ENCODE measurements at regions of chr15 and their contacts with region 1.

Region 1: DNA sequence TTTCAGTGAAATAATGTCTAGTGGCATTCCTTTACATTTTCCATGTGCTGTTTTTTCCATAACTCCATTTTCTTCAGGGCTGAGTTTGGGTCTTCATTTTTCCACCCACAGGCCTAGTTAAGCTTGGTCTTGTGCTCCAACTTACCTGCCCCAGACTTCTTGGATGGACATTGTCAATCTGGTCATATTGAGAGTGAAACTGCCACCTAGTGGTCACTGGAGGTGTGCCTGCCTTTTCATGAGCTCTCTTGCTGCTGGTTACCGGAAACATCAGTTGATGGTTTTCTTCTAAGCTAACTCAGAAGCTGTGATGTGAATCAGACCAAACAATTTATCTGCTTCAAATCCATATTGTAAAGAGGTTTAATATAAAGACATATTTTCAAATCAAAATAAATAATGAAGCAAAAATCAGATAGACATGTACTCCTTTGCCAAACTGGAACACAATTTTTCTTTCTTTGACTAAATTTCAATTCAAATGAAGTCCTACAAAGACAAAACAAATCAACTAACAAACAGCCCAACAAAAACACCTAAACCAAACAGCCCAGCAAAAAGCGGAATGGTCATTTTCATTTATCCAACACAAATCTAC is 135.1 kb upstream of the RASGRP1 start:
- DNase-seq: peak; percentile 89
- ATAC-seq: peak; percentile 56
- H3K4me3 Mint-ChIP-seq: no peak overlapping the region
- H3K27ac Mint-ChIP-seq: peak overlapping the region; percentile 59
- H3K4me1 Mint-ChIP-seq: peaks cover 58% of the 10 kb centered on the region
- H3K27me3 Mint-ChIP-seq: no peaks in the 10 kb centered on the region
- CTCF ChIP-seq: peak; percentile 89

Region 2: GRCh38 chr15:38453971-38454695 is 245.6 kb before region 1 on chr15 and contains the start of gene FAM98B:
- CTCF ChIA-PET with region 1: interaction called, 63 read pairs
- POLR2A ChIA-PET with region 1: interaction called, 15 read pairs
- intact Hi-C with region 1: no loop called
- DNase-seq: peak; percentile 89
- ATAC-seq: peak; percentile 95
- H3K4me3 Mint-ChIP-seq: peak within 1 kb of the TSS; percentile 95
- H3K27ac Mint-ChIP-seq: peak within 1 kb of the TSS; percentile 93
- H3K4me1 Mint-ChIP-seq: peaks cover 30% of the 10 kb centered on the region
- H3K27me3 Mint-ChIP-seq: no peaks in the 10 kb centered on the region
- CTCF ChIP-seq: no peak
- total RNA-seq, gene FAM98B: 51.0 to 61.8 TPM

Region 3: GRCh38 chr15:38474155-38474757 is 225.5 kb before region 1 on chr15:
- CTCF ChIA-PET with region 1: interaction called, 108 read pairs
- POLR2A ChIA-PET with region 1: interaction called, 4 read pairs
- intact Hi-C with region 1: no loop called
- DNase-seq: peak; percentile 24
- ATAC-seq: peak; percentile 97
- H3K4me3 Mint-ChIP-seq: no peak overlapping the region
- H3K27ac Mint-ChIP-seq: no peak overlapping the region
- H3K4me1 Mint-ChIP-seq: peaks cover 2% of the 10 kb centered on the region
- H3K27me3 Mint-ChIP-seq: no peaks in the 10 kb centered on the region
- CTCF ChIP-seq: peak; percentile 79

Region 4: GRCh38 chr15:38508647-38509046 is 191.1 kb before region 1 on chr15:
- CTCF ChIA-PET with region 1: interaction called, 46 read pairs
- POLR2A ChIA-PET with region 1: interaction called, 3 read pairs
- intact Hi-C with region 1: no loop called
- DNase-seq: peak; percentile 33
- ATAC-seq: peak; percentile 78
- H3K4me3 Mint-ChIP-seq: no peak overlapping the region
- H3K27ac Mint-ChIP-seq: peak overlapping the region; percentile 93
- H3K4me1 Mint-ChIP-seq: peaks cover 38% of the 10 kb centered on the region
- H3K27me3 Mint-ChIP-seq: no peaks in the 10 kb centered on the region
- CTCF ChIP-seq: no peak

Region 5: GRCh38 chr15:38554354-38554753 is 145.4 kb before region 1 on chr15:
- CTCF ChIA-PET with region 1: interaction called, 104 read pairs
- POLR2A ChIA-PET with region 1: no interaction called
- intact Hi-C with region 1: no loop called
- DNase-seq: peak; percentile 67
- ATAC-seq: peak; percentile 73
- H3K4me3 Mint-ChIP-seq: peak overlapping the region; percentile 54
- H3K27ac Mint-ChIP-seq: peak overlapping the region; percentile 96
- H3K4me1 Mint-ChIP-seq: peaks cover 88% of the 10 kb centered on the region
- H3K27me3 Mint-ChIP-seq: no peaks in the 10 kb centered on the region
- CTCF ChIP-seq: no peak

Region 6: DNA sequence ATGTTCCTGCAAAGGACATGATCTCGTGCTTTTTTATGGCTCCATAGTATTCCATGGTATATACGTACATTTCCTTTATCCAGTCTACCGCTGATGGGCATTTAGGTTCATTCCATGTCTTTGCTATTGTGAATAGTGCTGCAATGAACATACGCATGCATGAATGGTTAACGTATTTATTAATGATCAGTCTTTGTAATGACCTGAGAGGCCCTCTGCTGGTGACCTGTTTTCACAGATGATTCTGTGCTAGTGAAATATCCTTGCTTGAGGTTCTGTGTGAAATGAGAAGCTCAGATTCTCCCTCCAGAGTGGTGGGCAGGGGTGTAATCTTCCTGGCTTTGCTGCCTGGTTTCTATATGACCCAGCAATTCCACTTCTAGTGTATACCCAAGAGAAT is 25.1 kb after region 1 on chr15:
- CTCF ChIA-PET with region 1: interaction called, 19 read pairs
- POLR2A ChIA-PET with region 1: no interaction called
- intact Hi-C with region 1: no loop called
- DNase-seq: no peak
- ATAC-seq: no peak
- H3K4me3 Mint-ChIP-seq: no peak overlapping the region
- H3K27ac Mint-ChIP-seq: no peak overlapping the region
- H3K4me1 Mint-ChIP-seq: no peaks in the 10 kb centered on the region
- H3K27me3 Mint-ChIP-seq: no peaks in the 10 kb centered on the region
- CTCF ChIP-seq: no peak

Region 7: GRCh38 chr15:38755718-38756117 is 56.0 kb after region 1 on chr15:
- CTCF ChIA-PET with region 1: no interaction called
- POLR2A ChIA-PET with region 1: no interaction called
- intact Hi-C with region 1: no loop called
- DNase-seq: no peak
- ATAC-seq: no peak
- H3K4me3 Mint-ChIP-seq: no peak overlapping the region
- H3K27ac Mint-ChIP-seq: no peak overlapping the region
- H3K4me1 Mint-ChIP-seq: no peaks in the 10 kb centered on the region
- H3K27me3 Mint-ChIP-seq: peaks cover 14% of the 10 kb centered on the region
- CTCF ChIP-seq: no peak

Region 8: GRCh38 chr15:38768970-38769369 is 69.2 kb after region 1 on chr15:
- CTCF ChIA-PET with region 1: no interaction called
- POLR2A ChIA-PET with region 1: no interaction called
- intact Hi-C with region 1: no loop called
- DNase-seq: peak; percentile 1
- ATAC-seq: no peak
- H3K4me3 Mint-ChIP-seq: no peak overlapping the region
- H3K27ac Mint-ChIP-seq: no peak overlapping the region
- H3K4me1 Mint-ChIP-seq: no peaks in the 10 kb centered on the region
- H3K27me3 Mint-ChIP-seq: peaks cover 1% of the 10 kb centered on the region
- CTCF ChIP-seq: no peak